ENCODE measurements at regions of chr7 and their contacts with region 1.

Region 1: DNA sequence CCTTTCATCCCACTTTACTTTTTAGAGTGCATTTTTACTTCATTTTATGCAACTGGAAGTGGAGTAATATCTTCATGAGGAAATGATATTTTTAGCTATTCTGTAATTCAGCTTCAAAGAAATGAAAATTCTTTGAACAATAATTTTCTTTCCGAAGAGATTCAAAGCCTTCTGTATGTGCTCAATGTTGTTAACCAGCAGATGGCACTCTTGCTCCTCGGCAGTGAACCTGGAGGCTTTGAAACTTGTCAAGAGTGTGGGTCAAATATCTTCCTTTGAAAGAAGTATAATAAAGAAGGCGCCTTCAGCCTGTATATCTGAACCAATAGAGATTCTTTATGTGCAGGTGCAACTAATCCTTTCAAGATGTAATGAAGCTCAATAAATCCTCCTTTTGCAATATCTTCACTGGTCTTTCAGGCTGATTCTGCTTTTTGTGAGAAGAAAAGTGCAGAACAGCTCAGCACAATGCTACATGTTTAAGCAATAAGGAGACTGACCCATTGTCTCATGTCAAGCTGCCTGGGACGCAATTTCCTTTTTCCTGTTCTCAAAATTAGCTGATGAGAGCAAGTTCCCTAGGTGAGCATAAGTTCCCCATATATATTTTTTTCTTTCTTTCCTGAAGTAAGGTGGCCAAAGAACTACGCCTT is 258.4 kb downstream of the SEMA3A start:
- DNase-seq: no peak
- H3K4me3 ChIP-seq: no peak overlapping the region
- H3K27ac ChIP-seq: no peak overlapping the region
- H3K4me1 ChIP-seq: peaks cover 3 to 9% (median 6%) of the 10 kb centered on the region in 4 donors
- H3K27me3 ChIP-seq: no peaks in the 10 kb centered on the region
- CTCF ChIP-seq: peak; percentile 76 to 88 (median 86)
- EP300 ChIP-seq: no peak
- POLR2A ChIP-seq: no peak

Region 2: DNA sequence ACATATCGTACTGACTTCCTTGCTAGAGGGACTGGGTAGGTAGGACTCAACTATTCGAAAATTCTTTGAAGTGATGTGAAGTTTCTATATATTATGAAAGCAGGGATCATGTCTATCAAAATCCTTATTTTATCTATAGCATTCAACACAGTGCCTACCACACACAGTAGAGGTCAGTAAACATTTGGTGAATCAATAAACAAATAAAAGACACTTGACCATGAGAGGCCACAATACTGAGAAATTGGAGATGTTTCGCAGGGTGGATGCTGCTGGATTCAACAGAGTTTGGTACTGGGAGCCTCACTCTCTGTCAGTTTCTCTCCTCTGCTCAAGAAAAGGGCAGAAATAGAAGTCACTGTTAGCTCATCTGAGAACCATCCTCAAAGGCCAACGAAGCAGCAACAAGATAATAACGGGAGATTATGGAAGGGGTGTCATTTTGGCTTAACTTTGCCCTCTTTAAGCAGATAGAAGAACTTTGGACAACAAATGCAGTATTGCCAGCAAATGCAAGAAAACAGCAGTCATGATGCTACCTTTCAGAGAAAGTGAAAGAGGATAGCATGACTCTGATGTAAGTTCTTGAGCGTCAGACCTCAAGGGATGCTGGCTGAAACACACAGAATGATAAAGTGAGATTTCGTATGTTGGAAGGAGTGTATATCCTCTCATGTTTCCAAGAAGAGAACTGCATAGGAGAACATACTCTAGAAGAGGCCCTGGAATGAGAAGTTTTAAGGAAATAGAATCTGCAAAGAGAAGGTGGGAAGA is 394.8 kb before region 1 on chr7:
- intact Hi-C with region 1: no loop called
- DNase-seq: no peak
- H3K4me3 ChIP-seq: no peak overlapping the region
- H3K27ac ChIP-seq: no peak overlapping the region
- H3K4me1 ChIP-seq: no peaks in the 10 kb centered on the region
- H3K27me3 ChIP-seq: no peaks in the 10 kb centered on the region
- CTCF ChIP-seq: no peak
- EP300 ChIP-seq: no peak
- POLR2A ChIP-seq: no peak

Region 3: GRCh38 chr7:85554236-85555178 is 1618.3 kb after region 1 on chr7:
- intact Hi-C with region 1: loop called (anchors 10 kb)
- DNase-seq: no peak
- H3K4me3 ChIP-seq: no peak overlapping the region
- H3K27ac ChIP-seq: no peak overlapping the region
- H3K4me1 ChIP-seq: no peaks in the 10 kb centered on the region
- H3K27me3 ChIP-seq: no peaks in the 10 kb centered on the region
- CTCF ChIP-seq: peak; percentile 50 to 74 (median 64)
- EP300 ChIP-seq: no peak
- POLR2A ChIP-seq: no peak

Measured in esophagus muscularis mucosa (tissue), 4 donors.